BJ (cell line): ENCODE measurements at regions of chr12 and their contacts with region 1.

Region 1: GRCh38 chr12:118164798-118165486 is 29.0 kb downstream of the PEBP1 start:
- DNase-seq: no peak
- H3K4me3 ChIP-seq: no peak overlapping the region
- H3K27me3 ChIP-seq: no peaks in the 10 kb centered on the region
- CTCF ChIP-seq: peak; percentile 64

Region 2: GRCh38 chr12:118102092-118102491 is 62.9 kb before region 1 on chr12:
- CTCF ChIA-PET with region 1: no interaction called
- POLR2A ChIA-PET with region 1: no interaction called
- DNase-seq: no peak
- H3K4me3 ChIP-seq: no peak overlapping the region
- H3K27me3 ChIP-seq: no peaks in the 10 kb centered on the region
- CTCF ChIP-seq: no peak

Region 3: GRCh38 chr12:118175823-118176447 is 11.0 kb after region 1 on chr12:
- CTCF ChIA-PET with region 1: interaction called, 10 read pairs
- POLR2A ChIA-PET with region 1: no interaction called
- DNase-seq: no peak
- H3K4me3 ChIP-seq: no peak overlapping the region
- H3K27me3 ChIP-seq: no peaks in the 10 kb centered on the region
- CTCF ChIP-seq: no peak

Region 4: GRCh38 chr12:119649202-119649808 is 1484.4 kb after region 1 on chr12:
- CTCF ChIA-PET with region 1: no interaction called
- POLR2A ChIA-PET with region 1: no interaction called
- DNase-seq: no peak
- H3K4me3 ChIP-seq: no peak overlapping the region
- H3K27me3 ChIP-seq: no peaks in the 10 kb centered on the region
- CTCF ChIP-seq: peak; percentile 57